GM23248 (cell line): ENCODE measurements at regions of chr4 and their contacts with region 1.

Region 1: GRCh38 chr4:173013232-173013930 is 155.2 kb upstream of the GALNT7 start:
- DNase-seq: peak; percentile 42
- H3K4me3 ChIP-seq: no peak overlapping the region
- H3K27ac ChIP-seq: no peak overlapping the region
- H3K4me1 ChIP-seq: peaks cover 10% of the 10 kb centered on the region
- H3K27me3 ChIP-seq: peaks cover 17% of the 10 kb centered on the region

Region 2: GRCh38 chr4:172786039-172786792 is 227.2 kb before region 1 on chr4:
- in situ Hi-C with region 1: no loop called
- DNase-seq: peak; percentile 9
- H3K4me3 ChIP-seq: no peak overlapping the region
- H3K27ac ChIP-seq: no peak overlapping the region
- H3K4me1 ChIP-seq: no peaks in the 10 kb centered on the region
- H3K27me3 ChIP-seq: no peaks in the 10 kb centered on the region; the same call in 1 of the 2 replicates

Region 3: GRCh38 chr4:173420324-173420752 is 407.0 kb after region 1 on chr4:
- in situ Hi-C with region 1: loop called (anchors 25 kb)
- DNase-seq: peak; percentile 52
- H3K4me3 ChIP-seq: no peak overlapping the region
- H3K27ac ChIP-seq: no peak overlapping the region
- H3K4me1 ChIP-seq: peaks cover 12% of the 10 kb centered on the region
- H3K27me3 ChIP-seq: no peaks in the 10 kb centered on the region